Activated naive CD4-positive, alpha-beta T cell treated with anti-CD3 and anti-CD28 coated beads, Interleukin-2, amount 10 ng/mL, durations not matched to agents 7 days and 5 days (primary cell): ENCODE measurements at regions of chr11 and their contacts with region 1.

Region 1: GRCh38 chr11:33987975-33988580 is 63.5 kb upstream of the CAPRIN1 start:
- DNase-seq: peak; percentile 78
- H3K4me3 Mint-ChIP-seq: no peak overlapping the region
- H3K27ac Mint-ChIP-seq: no peak overlapping the region
- H3K4me1 Mint-ChIP-seq: peaks cover 8% of the 10 kb centered on the region
- H3K27me3 Mint-ChIP-seq: peaks cover 16% of the 10 kb centered on the region

Region 2: GRCh38 chr11:33976495-33977199 is 11.4 kb before region 1 on chr11:
- CTCF ChIA-PET with region 1: interaction called, 12 read pairs
- DNase-seq: no peak
- H3K4me3 Mint-ChIP-seq: no peak overlapping the region
- H3K27ac Mint-ChIP-seq: no peak overlapping the region
- H3K4me1 Mint-ChIP-seq: no peaks in the 10 kb centered on the region
- H3K27me3 Mint-ChIP-seq: peaks cover 11% of the 10 kb centered on the region

Region 3: DNA sequence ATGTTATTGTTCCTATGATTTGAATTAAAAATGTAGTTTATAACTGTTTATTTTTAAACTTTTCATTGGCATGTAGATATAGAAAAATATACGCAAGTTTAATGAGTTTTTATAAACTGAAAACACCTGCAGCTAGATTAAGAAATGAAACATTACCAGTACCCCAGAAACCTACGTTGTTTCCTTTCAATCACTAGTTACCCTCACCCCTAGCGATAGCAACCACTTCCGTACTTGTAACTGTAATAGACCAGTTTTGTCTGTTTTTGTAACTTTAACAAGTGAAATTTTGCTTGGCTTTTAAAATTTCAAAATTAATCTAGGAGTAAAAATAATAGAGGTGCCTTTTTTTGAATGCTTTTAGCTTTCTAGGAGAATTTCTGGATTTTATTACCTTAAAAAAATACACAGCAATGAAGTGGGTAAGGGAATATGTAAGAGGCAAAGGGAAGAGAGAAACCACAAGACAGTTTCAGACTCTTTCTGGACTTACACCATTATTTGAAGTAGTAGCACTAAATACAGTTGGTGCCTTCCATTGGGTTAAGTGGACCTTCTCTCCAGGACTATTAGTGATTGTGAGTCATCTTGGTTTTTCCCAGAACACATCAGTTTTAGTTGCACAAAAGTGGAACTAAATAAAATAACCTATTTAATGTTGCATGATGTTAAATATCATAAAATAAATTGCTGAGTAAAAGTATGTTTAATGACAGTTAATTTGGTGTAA is 98.6 kb after region 1 on chr11:
- CTCF ChIA-PET with region 1: no interaction called
- DNase-seq: no peak
- H3K4me3 Mint-ChIP-seq: no peak overlapping the region
- H3K27ac Mint-ChIP-seq: peak overlapping the region; percentile 89
- H3K4me1 Mint-ChIP-seq: peaks cover 17% of the 10 kb centered on the region
- H3K27me3 Mint-ChIP-seq: no peaks in the 10 kb centered on the region